Activated B cell treated with CpG ODN at 0.5 μM for 24 hours (primary cell): ENCODE measurements at regions of chr19 and their contacts with region 1.

Region 1: DNA sequence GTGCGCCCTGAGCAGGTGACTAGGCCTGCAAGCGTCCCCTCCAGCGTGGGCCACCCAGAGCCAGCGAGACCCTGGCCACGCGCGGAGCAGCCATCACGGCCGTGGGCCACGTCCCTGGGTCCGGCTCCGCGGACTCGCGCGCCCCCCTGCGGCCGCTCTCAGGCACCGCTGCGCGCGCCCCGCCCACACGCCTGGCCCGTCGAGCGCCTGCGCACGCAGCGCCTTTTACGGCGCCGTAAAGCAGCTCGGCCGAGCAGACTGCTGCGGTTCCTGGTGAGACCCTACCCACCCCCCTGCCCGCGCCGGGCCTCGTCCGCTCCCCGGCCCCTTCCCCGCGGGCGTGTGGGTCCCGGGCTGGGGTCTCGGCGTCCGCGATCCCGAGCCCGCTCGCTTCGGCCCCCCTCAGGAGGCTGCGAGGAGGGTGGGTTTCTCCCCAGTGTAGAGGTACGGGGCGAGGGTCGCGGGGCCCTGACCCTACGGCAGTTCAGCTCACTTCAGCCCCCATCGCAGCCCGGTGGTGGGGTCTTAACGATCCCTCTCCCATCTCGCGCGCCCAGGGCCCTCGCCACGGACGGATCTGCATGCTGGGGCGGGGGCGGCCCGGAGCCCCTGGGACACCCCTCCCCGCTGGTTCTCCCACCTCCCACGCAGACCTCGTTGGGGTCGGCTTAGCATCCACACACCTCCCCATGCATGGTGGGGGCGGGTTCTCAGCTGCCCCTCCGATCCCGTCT is at the start of gene TRAPPC5:
- DNase-seq: peak; percentile 91
- ATAC-seq: peak; percentile 53
- H3K4me3 Mint-ChIP-seq: peak within 1 kb of the TSS; percentile 93
- H3K27ac Mint-ChIP-seq: peak within 1 kb of the TSS; percentile 93
- H3K4me1 Mint-ChIP-seq: peaks cover 61% of the 10 kb centered on the region
- H3K27me3 Mint-ChIP-seq: peaks cover 14% of the 10 kb centered on the region
- CTCF ChIP-seq: peak; percentile 78
- total RNA-seq, gene TRAPPC5: 110 and 123 TPM in 2 replicates

Region 2: DNA sequence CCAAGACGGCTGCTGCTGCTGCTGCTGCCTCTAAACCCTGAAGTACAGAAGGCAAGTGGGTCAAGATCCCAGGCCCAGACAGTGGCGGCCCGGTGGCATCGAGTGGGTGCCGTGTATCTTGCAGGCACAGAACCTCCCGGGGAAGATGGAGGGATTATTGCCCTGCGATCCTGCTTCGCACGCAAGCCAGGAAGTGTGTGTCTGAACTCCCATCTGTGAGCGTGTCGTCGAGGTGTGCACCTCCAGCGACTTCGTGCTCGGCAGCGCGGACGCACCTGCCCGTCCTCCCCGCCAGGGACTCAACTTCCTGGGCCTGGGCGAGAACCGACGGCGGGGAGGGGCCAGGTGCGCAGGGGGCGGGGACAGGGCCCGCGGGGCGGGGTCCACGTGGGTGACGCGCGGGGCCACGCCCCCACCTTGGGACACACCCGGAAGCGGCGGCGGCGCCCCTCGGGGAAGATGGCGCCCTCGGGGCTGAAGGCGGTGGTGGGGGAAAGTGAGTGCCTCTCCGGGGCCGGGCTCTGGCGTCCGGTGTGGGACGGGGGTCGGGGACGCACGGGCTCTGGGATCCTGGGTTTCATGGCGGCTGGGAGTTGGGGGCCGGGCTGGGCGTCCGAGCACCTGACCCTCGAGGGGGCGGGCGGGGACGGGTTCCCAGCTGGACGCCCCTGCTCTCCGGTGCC is 43.9 kb before region 1 on chr19 and contains the start of gene STXBP2:
- CTCF ChIA-PET with region 1: interaction called, 4 read pairs
- POLR2A ChIA-PET with region 1: interaction called, 3 read pairs
- intact Hi-C with region 1: loop called (anchors 1 kb)
- DNase-seq: peak; percentile 93
- ATAC-seq: peak; percentile 98
- H3K4me3 Mint-ChIP-seq: peak within 1 kb of the TSS; percentile 86
- H3K27ac Mint-ChIP-seq: peak within 1 kb of the TSS; percentile 90
- H3K4me1 Mint-ChIP-seq: peaks cover 36% of the 10 kb centered on the region
- H3K27me3 Mint-ChIP-seq: no peaks in the 10 kb centered on the region
- CTCF ChIP-seq: no peak
- total RNA-seq, gene STXBP2: 147 and 176 TPM in 2 replicates

Region 3: DNA sequence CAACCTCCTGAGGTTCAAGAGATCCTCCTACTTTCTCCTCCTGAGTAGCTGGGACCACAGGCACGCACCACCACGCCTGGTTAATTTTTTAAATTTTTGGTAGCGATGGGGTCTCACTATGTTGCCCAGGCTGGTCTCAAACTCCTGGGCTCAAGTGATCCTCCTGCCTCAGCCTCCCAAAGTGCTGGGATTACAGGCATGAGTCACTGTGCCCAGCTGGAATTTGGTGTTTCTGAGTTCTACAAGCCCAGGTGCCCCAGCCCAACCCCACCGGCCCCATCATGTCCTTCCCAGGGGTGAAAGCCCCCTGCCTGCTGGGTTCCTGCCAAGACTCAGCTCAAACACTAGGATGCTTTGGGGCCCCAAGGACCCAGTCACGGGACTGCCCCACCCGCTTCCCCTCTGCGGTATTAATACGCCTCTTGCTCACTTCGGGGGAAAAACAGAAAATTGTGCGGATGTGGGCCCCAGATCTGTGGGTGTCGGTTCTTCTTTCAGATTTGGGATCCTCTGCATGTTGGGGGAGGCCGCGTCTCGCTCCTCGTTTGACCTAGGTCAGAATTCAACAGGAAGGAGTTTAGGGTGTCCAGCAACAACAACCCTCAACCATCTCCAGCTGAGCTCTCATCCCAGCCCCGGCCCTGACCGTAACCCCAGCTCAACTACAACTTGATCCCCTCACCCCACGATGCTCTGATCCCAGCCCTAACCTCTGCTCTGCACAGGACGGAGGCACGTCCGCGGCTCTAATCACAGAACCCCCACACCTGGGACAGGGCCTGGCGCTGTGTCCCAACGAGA is 24.8 kb after region 1 on chr19:
- CTCF ChIA-PET with region 1: interaction called, 48 read pairs
- POLR2A ChIA-PET with region 1: interaction called, 42 read pairs
- intact Hi-C with region 1: loop called (anchors 1 kb)
- DNase-seq: peak; percentile 78
- ATAC-seq: peak; percentile 38
- H3K4me3 Mint-ChIP-seq: peak overlapping the region; percentile 78
- H3K27ac Mint-ChIP-seq: peak overlapping the region; percentile 97
- H3K4me1 Mint-ChIP-seq: peaks cover 96% of the 10 kb centered on the region
- H3K27me3 Mint-ChIP-seq: no peaks in the 10 kb centered on the region
- CTCF ChIP-seq: no peak

Region 4: DNA sequence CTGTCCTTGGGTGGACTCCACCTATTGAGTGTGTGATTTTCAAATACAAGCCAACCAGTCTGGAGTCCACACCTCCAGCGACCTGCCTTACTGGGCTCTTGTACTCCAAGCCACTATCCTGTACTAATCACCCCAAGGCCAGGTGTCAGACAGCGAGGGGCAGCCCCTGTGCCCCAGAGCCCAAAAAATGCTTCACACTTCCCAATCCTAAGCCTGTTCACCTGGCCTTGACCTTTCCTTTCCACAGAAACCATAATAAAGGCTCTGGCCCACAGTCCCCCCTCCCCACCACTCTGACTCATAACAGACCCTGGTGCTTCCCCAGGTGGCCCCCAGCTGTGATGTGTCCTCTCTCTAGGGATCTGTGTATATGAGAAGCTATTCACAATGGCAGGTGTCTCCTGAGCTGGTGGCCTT is 62.7 kb after region 1 on chr19:
- CTCF ChIA-PET with region 1: interaction called, 9 read pairs
- POLR2A ChIA-PET with region 1: interaction called, 18 read pairs
- intact Hi-C with region 1: loop called (anchors 1 kb)
- DNase-seq: peak; percentile 64
- ATAC-seq: peak; percentile 94
- H3K4me3 Mint-ChIP-seq: peak overlapping the region; percentile 45
- H3K27ac Mint-ChIP-seq: peak overlapping the region; percentile 77
- H3K4me1 Mint-ChIP-seq: peaks cover 57% of the 10 kb centered on the region
- H3K27me3 Mint-ChIP-seq: peaks cover 8% of the 10 kb centered on the region
- CTCF ChIP-seq: no peak

Region 5: GRCh38 chr19:7852851-7853769 is 172.3 kb after region 1 on chr19:
- CTCF ChIA-PET with region 1: no interaction called
- POLR2A ChIA-PET with region 1: no interaction called
- intact Hi-C with region 1: loop called (anchors 2 kb)
- DNase-seq: peak; percentile 68
- ATAC-seq: peak; percentile 89
- H3K4me3 Mint-ChIP-seq: no peak overlapping the region
- H3K27ac Mint-ChIP-seq: no peak overlapping the region
- H3K4me1 Mint-ChIP-seq: peaks cover 4% of the 10 kb centered on the region
- H3K27me3 Mint-ChIP-seq: no peaks in the 10 kb centered on the region
- CTCF ChIP-seq: peak; percentile 73

Region 6: GRCh38 chr19:7925171-7925851 is 244.5 kb after region 1 on chr19:
- CTCF ChIA-PET with region 1: interaction called, 3 read pairs
- POLR2A ChIA-PET with region 1: interaction called, 6 read pairs
- intact Hi-C with region 1: loop called (anchors 1 kb)
- DNase-seq: peak; percentile 75
- ATAC-seq: peak; percentile 8
- H3K4me3 Mint-ChIP-seq: peak overlapping the region; percentile 84
- H3K27ac Mint-ChIP-seq: no peak overlapping the region
- H3K4me1 Mint-ChIP-seq: peaks cover 30% of the 10 kb centered on the region
- H3K27me3 Mint-ChIP-seq: peaks cover 1% of the 10 kb centered on the region
- CTCF ChIP-seq: peak; percentile 29